Heart right ventricle (tissue), 16 donors: ENCODE measurements at regions of chr10 and their contacts with region 1.

Region 1: GRCh38 chr10:97072851-97073665 is 112.7 kb downstream of the SLIT1 start:
- DNase-seq: peak; percentile 76 to 80
- ATAC-seq: peak; percentile 67 to 90 (median 83)
- H3K4me3 ChIP-seq: no peak overlapping the region
- H3K27ac ChIP-seq: no peak overlapping the region
- H3K4me1 ChIP-seq: peaks cover 0 to 3% (median 0%) of the 10 kb centered on the region in 9 donors
- H3K27me3 ChIP-seq: peaks cover 0 to 43% (median 18%) of the 10 kb centered on the region in 7 donors
- CTCF ChIP-seq: peak; percentile 78 to 97 (median 93)

Region 2: GRCh38 chr10:96910488-96911395 is 162.3 kb before region 1 on chr10:
- intact Hi-C with region 1: no loop called
- DNase-seq: peak in 1 of 2 donors; percentile 18
- ATAC-seq: peak in 4 of 8 donors; percentile 37 to 54 (median 52)
- H3K4me3 ChIP-seq: no peak overlapping the region
- H3K27ac ChIP-seq: no peak overlapping the region
- H3K4me1 ChIP-seq: peaks cover 0 to 59% (median 19%) of the 10 kb centered on the region in 9 donors
- H3K27me3 ChIP-seq: no peaks in the 10 kb centered on the region
- CTCF ChIP-seq: peak; percentile 27 to 71 (median 62)

Region 3: DNA sequence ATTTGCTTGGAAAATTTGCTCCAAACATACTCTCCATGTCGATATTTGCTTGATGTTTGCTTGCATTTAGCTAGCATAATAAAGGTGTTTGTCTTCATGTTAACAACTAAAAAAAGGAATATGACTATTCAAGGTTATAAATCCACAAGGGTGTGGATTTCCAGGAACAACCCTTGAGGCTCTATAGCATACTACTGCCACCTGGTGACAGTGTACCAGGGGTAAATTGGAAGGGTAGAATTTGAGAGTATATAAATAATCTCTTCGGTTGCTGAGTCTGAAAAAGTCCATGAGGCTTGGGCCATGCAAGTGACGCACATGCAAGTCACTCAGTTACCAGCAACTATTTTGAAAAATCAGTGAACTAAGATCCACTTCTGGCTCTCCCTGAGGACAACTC is 44.3 kb after region 1 on chr10:
- intact Hi-C with region 1: loop called in 9 of 10 experiments (anchors 1 to 5 kb)
- DNase-seq: no peak
- ATAC-seq: peak in 4 of 8 donors; percentile 37 to 60 (median 44)
- H3K4me3 ChIP-seq: no peak overlapping the region
- H3K27ac ChIP-seq: no peak overlapping the region
- H3K4me1 ChIP-seq: peaks cover 0 to 3% (median 0%) of the 10 kb centered on the region in 9 donors
- H3K27me3 ChIP-seq: peaks cover 0 to 23% (median 9%) of the 10 kb centered on the region in 7 donors
- CTCF ChIP-seq: peak; percentile 31 to 66 (median 45)

Region 4: GRCh38 chr10:97196223-97197029 is 123.4 kb after region 1 on chr10:
- intact Hi-C with region 1: loop called in 2 of 10 experiments (anchors 5 kb)
- DNase-seq: peak; percentile 23 to 52
- ATAC-seq: peak; percentile 55 to 86 (median 76)
- H3K4me3 ChIP-seq: peak overlapping the region; percentile 7 to 64 (median 53)
- H3K27ac ChIP-seq: peak overlapping the region in 1 of 10 donors; percentile 8
- H3K4me1 ChIP-seq: peaks cover 0 to 14% (median 7%) of the 10 kb centered on the region in 9 donors
- H3K27me3 ChIP-seq: peaks cover 0 to 74% (median 22%) of the 10 kb centered on the region in 7 donors
- CTCF ChIP-seq: peak in 8 of 9 donors; percentile 38 to 80 (median 62)

Region 5: DNA sequence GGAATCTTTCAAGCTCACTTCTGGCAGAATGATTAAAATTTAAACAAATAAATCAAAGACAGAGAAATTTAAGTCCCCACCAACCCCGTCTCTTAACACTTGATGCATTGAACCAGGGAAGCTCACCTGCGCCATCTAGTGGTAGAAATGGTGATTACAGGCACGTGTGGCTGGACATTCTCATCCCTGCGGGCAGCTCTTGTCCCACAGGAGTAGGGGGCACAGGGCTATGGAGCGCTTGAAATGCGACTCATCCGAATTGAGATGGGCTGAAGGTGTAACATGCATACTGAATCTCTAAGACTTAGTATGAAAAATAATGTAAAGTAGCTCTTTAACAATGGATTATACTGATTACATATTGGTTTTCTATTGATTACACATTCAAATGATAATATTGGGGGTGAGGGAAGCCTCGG is 137.5 kb after region 1 on chr10:
- intact Hi-C with region 1: loop called (anchors 1 to 2 kb)
- DNase-seq: peak; percentile 53 to 61
- ATAC-seq: peak; percentile 51 to 75 (median 64)
- H3K4me3 ChIP-seq: no peak overlapping the region
- H3K27ac ChIP-seq: no peak overlapping the region
- H3K4me1 ChIP-seq: no peaks in the 10 kb centered on the region
- H3K27me3 ChIP-seq: peaks cover 0 to 23% (median 0%) of the 10 kb centered on the region in 7 donors
- CTCF ChIP-seq: peak; percentile 87 to 99 (median 97)